Mammary epithelial cell (primary cell): ENCODE measurements at regions of chr4 and their contacts with region 1.

Region 1: GRCh38 chr4:142353149-142353738 is 492.9 kb downstream of the INPP4B start:
- DNase-seq: peak; percentile 59
- H3K4me3 ChIP-seq: peak overlapping the region in 1 of 3 experiments; percentile 24
- H3K27ac ChIP-seq: peak overlapping the region; percentile 32
- H3K4me1 ChIP-seq: peaks cover 33% of the 10 kb centered on the region
- H3K27me3 ChIP-seq: no peaks in the 10 kb centered on the region
- CTCF ChIP-seq: peak; percentile 83 to 91

Region 2: DNA sequence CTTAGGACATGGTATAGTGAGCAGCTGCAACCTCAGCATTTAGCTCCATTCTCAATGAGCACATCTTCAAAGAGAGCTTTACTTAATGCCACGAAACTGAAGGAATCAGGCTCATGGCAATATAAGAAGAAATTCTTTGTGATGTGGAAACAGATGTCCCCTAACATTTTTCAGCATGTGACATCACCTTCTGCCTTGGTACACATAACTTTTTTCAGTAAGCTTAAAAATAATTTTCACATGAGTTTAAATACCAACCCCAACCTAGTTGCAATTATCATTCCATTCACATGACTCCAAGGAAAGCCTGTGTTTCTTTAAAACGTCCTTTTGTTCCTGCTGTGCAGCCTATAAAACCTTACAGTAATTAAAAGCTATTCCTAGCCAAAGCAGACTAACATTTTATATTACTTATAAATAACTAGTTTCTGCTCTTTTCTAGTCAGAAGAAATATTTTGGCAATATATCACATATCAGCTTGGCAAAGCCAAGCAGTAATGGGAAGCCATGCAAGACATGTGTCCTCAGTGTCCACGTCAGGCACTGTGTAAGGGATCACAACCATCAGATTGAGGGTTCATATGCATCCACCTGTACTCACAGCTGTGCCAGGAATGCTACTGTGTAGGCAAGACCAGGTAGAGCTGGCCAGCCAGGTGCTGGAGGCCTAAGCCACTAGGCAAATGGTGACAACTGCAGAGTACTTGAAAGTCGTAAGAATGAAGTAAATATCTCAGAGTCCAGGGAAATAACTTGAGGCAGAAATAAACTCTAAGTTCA is 26.2 kb after region 1 on chr4:
- CTCF ChIA-PET with region 1: no interaction called
- dilution Hi-C with region 1: no loop called
- in situ Hi-C with region 1: no loop called
- intact Hi-C with region 1: loop called (anchors 1 kb)
- DNase-seq: peak; percentile 69
- H3K4me3 ChIP-seq: no peak overlapping the region
- H3K27ac ChIP-seq: peak overlapping the region; percentile 83
- H3K4me1 ChIP-seq: peaks cover 39% of the 10 kb centered on the region
- H3K27me3 ChIP-seq: no peaks in the 10 kb centered on the region
- CTCF ChIP-seq: no peak

Region 3: DNA sequence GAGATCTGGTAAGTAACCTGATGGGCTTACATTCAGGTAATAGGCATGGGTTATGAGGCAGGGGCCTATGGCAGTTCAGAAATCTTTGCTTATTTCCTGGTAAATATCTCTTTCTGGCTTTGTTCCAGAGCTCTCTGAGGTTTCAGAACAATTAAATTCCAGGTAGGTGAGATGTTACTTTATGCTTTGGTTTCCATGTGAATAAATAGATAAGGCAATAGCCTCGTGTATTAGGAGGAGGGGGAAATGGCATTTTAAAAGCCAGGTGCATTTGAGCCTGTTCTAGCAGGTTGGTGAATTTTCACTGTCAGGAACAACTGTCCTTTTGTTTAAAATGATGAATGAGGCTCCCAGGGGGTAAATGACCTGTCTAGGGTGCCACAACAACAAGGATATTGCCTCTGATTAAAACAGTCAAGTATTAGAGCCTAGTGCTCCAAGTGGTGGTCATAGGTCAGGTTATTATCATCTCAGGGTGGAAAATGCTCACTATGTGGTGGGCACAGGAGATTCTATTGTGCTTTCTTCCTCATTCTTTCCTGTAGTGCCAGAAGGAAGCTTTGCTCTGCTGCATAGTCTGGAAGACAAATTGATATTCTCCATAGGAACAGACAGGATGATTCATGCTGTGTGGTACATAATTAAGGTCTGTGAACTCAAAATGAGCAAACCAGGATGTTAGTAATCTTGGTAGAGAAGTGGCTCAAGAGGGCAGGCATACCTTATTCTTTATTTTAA is 196.7 kb after region 1 on chr4:
- CTCF ChIA-PET with region 1: interaction called, 6 read pairs
- dilution Hi-C with region 1: no loop called
- in situ Hi-C with region 1: no loop called
- intact Hi-C with region 1: loop called (anchors 1 kb)
- DNase-seq: peak; percentile 97
- H3K4me3 ChIP-seq: no peak overlapping the region
- H3K27ac ChIP-seq: peak overlapping the region; percentile 100
- H3K4me1 ChIP-seq: peaks cover 43% of the 10 kb centered on the region
- H3K27me3 ChIP-seq: no peaks in the 10 kb centered on the region
- CTCF ChIP-seq: peak in 1 of 2 donors; percentile 11

Region 4: GRCh38 chr4:142840516-142841123 is 487.4 kb after region 1 on chr4:
- CTCF ChIA-PET with region 1: no interaction called
- dilution Hi-C with region 1: no loop called
- in situ Hi-C with region 1: loop called (anchors 10 kb)
- intact Hi-C with region 1: loop called (anchors 1 kb)
- DNase-seq: no peak
- H3K4me3 ChIP-seq: no peak overlapping the region
- H3K27ac ChIP-seq: no peak overlapping the region
- H3K4me1 ChIP-seq: peaks cover 4% of the 10 kb centered on the region
- H3K27me3 ChIP-seq: no peaks in the 10 kb centered on the region
- CTCF ChIP-seq: peak; percentile 57 to 66

Region 5: GRCh38 chr4:143035661-143036060 is 682.4 kb after region 1 on chr4:
- CTCF ChIA-PET with region 1: no interaction called
- dilution Hi-C with region 1: no loop called
- in situ Hi-C with region 1: no loop called
- intact Hi-C with region 1: no loop called
- DNase-seq: no peak
- H3K4me3 ChIP-seq: no peak overlapping the region
- H3K27ac ChIP-seq: no peak overlapping the region
- H3K4me1 ChIP-seq: no peaks in the 10 kb centered on the region
- H3K27me3 ChIP-seq: peaks cover 2% of the 10 kb centered on the region
- CTCF ChIP-seq: no peak